ENCODE measurements at regions of chr14 and their contacts with region 1.

Region 1: DNA sequence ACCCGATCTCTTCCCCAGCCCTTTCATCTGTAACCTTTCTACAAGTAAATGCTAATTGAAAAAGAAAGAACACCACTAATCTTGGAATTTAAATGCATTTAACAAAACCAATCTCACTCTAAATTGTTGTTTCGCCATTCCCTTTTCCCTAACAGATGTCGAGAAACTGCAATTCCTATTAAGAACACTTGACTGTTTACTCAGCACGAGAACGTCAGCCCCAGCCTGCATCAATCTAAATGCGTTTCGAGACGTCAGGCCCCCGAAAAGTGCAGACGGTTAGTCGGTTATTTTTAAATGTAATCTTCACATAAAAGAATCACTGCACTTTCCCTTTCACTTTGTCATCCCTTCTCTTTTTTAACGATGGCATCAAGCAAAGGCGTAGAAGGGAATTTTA is 837.6 kb downstream of the VRK1 start:
- DNase-seq: peak; percentile 26
- ATAC-seq: peak; percentile 53
- H3K4me3 ChIP-seq: peak overlapping the region; percentile 56
- H3K27ac ChIP-seq: no peak overlapping the region
- H3K4me1 ChIP-seq: no peaks in the 10 kb centered on the region
- H3K27me3 ChIP-seq: peaks cover 44% of the 10 kb centered on the region
- CTCF ChIP-seq: no peak

Region 2: GRCh38 chr14:97724265-97724731 is 89.5 kb after region 1 on chr14:
- CTCF ChIA-PET with region 1: interaction called, 15 read pairs
- POLR2A ChIA-PET with region 1: no interaction called
- intact Hi-C with region 1: no loop called
- DNase-seq: no peak
- ATAC-seq: peak; percentile 42
- H3K4me3 ChIP-seq: peak overlapping the region; percentile 35; the same call in 1 of the 2 replicates
- H3K27ac ChIP-seq: no peak overlapping the region
- H3K4me1 ChIP-seq: peaks cover 6% of the 10 kb centered on the region; the same call in 1 of the 2 replicates
- H3K27me3 ChIP-seq: no peaks in the 10 kb centered on the region
- CTCF ChIP-seq: no peak